ENCODE measurements at regions of chr2 and their contacts with region 1.

Region 1: GRCh38 chr2:43318791-43319190 is 92.4 kb upstream of the ZFP36L2 start:
- DNase-seq: peak; percentile 75
- ATAC-seq: peak; percentile 72
- H3K4me3 ChIP-seq: no peak overlapping the region
- H3K27ac ChIP-seq: peak overlapping the region; percentile 14; the same call in 1 of the 2 replicates
- H3K4me1 ChIP-seq: peaks cover 33% of the 10 kb centered on the region
- H3K27me3 ChIP-seq: no peaks in the 10 kb centered on the region
- CTCF ChIP-seq: no peak

Region 2: GRCh38 chr2:43276962-43277391 is 41.8 kb before region 1 on chr2:
- CTCF ChIA-PET with region 1: no interaction called
- POLR2A ChIA-PET with region 1: no interaction called
- intact Hi-C with region 1: loop called (anchors 5 kb)
- DNase-seq: peak; percentile 61
- ATAC-seq: peak; percentile 19; the same call in 1 of the 2 replicates
- H3K4me3 ChIP-seq: no peak overlapping the region
- H3K27ac ChIP-seq: no peak overlapping the region
- H3K4me1 ChIP-seq: peaks cover 19% of the 10 kb centered on the region
- H3K27me3 ChIP-seq: no peaks in the 10 kb centered on the region
- CTCF ChIP-seq: no peak